H1 (cell line): ENCODE measurements at regions of chr11 and their contacts with region 1.

Region 1: DNA sequence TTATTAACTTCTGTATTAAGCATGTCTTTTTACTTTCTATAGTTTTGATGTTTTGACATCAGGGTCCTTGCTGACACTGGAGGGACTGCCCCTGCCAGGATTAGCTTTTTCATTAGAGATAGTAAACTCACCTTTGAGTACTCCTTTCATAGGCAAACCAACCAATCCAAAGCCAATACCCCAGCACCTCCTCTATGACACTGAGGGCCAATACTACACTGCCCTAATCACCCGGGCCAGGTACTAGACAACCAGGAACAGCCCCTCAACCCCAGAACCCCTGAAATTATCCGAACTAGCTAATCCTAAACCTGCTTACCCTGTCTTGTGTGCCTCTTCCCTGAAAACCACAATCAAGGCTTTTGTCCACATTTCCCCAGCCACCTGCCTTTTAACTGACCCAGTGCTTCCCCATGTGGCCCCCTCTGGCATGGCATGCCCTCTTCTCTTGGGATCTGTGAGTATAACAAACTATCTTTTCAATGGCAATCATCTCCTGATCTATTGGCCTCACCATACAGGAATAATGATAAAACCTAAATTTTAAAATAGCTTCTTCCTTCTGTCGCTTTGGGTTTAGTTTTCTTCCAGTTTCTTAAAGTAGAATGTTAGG is 31.2 kb downstream of the RAB6A start:
- DNase-seq: peak; percentile 33 to 82
- H3K4me3 ChIP-seq: no peak overlapping the region
- H3K27ac ChIP-seq: no peak overlapping the region
- H3K4me1 ChIP-seq: peaks cover 0 to 3% (median 2%) of the 10 kb centered on the region in 4 experiments; a peak in 3 of 7 replicates
- H3K27me3 ChIP-seq: no peaks in the 10 kb centered on the region
- CTCF ChIP-seq: peak; percentile 63 to 94 (median 80)
- EP300 ChIP-seq: no peak
- POLR2A ChIP-seq: no peak
- RAD21 ChIP-seq: peak; percentile 58 to 73

Region 2: DNA sequence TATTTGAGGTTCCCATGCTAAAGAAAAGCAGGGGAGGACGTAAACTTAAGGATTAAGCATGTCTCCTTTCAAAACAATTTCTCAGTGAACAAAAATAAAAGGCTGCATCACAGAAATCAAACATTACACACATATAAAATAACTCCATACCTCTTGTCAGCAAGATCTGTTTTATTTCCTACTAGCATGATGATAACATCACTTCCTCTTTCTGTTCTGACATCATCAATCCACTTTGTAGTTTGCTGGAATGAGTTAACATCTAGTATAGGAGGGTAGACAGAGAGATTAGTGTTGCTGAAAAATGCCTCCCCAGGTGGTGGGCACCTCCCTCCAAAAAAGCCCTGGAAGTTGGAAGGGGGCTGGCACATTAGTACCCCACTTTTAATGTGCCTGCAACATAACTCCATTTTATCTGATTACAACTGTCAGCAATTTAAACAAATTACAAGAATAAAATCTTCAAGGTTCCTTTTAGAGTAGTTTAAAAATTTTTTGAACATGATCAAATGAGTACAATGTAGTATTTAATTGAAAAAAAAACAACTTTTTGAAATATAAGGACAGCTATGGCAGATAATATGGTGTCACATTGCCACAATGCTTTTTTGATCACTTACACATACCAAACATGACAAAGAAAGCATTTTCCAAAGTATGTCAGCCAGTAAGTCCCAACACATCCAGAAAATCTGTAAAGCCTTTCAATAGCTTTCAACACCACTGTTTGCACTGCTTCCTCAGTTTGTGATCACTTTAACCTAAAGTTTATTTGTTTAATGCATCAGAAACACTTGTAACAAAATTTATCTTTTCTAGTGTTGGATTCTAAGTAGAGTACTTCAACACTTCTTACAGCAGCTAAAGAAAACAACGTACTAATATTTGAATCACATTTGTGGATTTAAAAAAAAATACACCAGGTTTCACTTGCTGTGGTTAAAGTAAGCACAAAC is 13.3 kb before region 1 on chr11:
- CTCF ChIA-PET with region 1: interaction called, 16 read pairs
- POLR2A ChIA-PET with region 1: interaction called, 3 read pairs
- DNase-seq: no peak
- H3K4me3 ChIP-seq: no peak overlapping the region
- H3K27ac ChIP-seq: no peak overlapping the region
- H3K4me1 ChIP-seq: no peaks in the 10 kb centered on the region
- H3K27me3 ChIP-seq: no peaks in the 10 kb centered on the region
- CTCF ChIP-seq: no peak
- EP300 ChIP-seq: no peak
- POLR2A ChIP-seq: no peak
- RAD21 ChIP-seq: no peak

Region 3: GRCh38 chr11:73752216-73752867 is 22.6 kb after region 1 on chr11:
- CTCF ChIA-PET with region 1: interaction called, 11 read pairs
- POLR2A ChIA-PET with region 1: no interaction called
- DNase-seq: peak in 1 of 2 experiments; percentile 39
- H3K4me3 ChIP-seq: no peak overlapping the region
- H3K27ac ChIP-seq: no peak overlapping the region
- H3K4me1 ChIP-seq: no peaks in the 10 kb centered on the region; a peak in 1 of 7 replicates
- H3K27me3 ChIP-seq: no peaks in the 10 kb centered on the region
- CTCF ChIP-seq: no peak
- EP300 ChIP-seq: no peak
- POLR2A ChIP-seq: no peak
- RAD21 ChIP-seq: no peak